Activated CD4-positive, alpha-beta T cell treated with anti-CD3 and anti-CD28 coated beads, Interleukin-2, amount 10 ng/mL, durations not matched to agents 24 days and 14 days (primary cell): ENCODE measurements at regions of chr2 and their contacts with region 1.

Region 1: GRCh38 chr2:230254152-230254881 is 28.8 kb downstream of the SP140 start:
- DNase-seq: peak; percentile 80
- H3K4me3 Mint-ChIP-seq: no peak overlapping the region
- H3K27ac Mint-ChIP-seq: no peak overlapping the region
- H3K4me1 Mint-ChIP-seq: peaks cover 18% of the 10 kb centered on the region
- H3K27me3 Mint-ChIP-seq: no peaks in the 10 kb centered on the region

Region 2: GRCh38 chr2:230234845-230235244 is 19.5 kb before region 1 on chr2:
- intact Hi-C with region 1: loop called (anchors 1 kb)
- DNase-seq: peak; percentile 57
- H3K4me3 Mint-ChIP-seq: peak overlapping the region; percentile 78
- H3K27ac Mint-ChIP-seq: peak overlapping the region; percentile 97
- H3K4me1 Mint-ChIP-seq: peaks cover 44% of the 10 kb centered on the region
- H3K27me3 Mint-ChIP-seq: no peaks in the 10 kb centered on the region

Region 3: DNA sequence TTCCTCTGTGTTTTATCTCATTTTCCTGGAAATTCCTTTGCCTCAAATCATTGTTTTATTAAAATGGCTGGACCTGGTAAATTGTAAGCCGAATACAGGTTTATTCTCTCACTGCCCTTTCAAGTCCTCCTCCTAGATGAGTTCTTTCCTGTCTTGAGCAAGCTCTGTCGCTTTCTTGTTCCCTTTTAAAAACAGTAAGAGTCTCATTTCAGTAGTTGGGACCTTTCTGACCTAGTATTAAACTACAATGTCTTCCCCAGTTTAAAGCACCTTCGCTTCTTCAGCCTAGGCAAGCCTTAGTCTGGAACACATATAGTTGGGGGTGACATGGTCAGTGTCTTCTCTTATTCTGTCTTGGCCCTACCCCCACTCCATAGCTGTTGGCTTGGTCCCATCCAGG is 31.7 kb after region 1 on chr2:
- intact Hi-C with region 1: loop called (anchors 1 kb)
- DNase-seq: no peak
- H3K4me3 Mint-ChIP-seq: no peak overlapping the region
- H3K27ac Mint-ChIP-seq: no peak overlapping the region
- H3K4me1 Mint-ChIP-seq: peaks cover 25% of the 10 kb centered on the region
- H3K27me3 Mint-ChIP-seq: no peaks in the 10 kb centered on the region

Region 4: DNA sequence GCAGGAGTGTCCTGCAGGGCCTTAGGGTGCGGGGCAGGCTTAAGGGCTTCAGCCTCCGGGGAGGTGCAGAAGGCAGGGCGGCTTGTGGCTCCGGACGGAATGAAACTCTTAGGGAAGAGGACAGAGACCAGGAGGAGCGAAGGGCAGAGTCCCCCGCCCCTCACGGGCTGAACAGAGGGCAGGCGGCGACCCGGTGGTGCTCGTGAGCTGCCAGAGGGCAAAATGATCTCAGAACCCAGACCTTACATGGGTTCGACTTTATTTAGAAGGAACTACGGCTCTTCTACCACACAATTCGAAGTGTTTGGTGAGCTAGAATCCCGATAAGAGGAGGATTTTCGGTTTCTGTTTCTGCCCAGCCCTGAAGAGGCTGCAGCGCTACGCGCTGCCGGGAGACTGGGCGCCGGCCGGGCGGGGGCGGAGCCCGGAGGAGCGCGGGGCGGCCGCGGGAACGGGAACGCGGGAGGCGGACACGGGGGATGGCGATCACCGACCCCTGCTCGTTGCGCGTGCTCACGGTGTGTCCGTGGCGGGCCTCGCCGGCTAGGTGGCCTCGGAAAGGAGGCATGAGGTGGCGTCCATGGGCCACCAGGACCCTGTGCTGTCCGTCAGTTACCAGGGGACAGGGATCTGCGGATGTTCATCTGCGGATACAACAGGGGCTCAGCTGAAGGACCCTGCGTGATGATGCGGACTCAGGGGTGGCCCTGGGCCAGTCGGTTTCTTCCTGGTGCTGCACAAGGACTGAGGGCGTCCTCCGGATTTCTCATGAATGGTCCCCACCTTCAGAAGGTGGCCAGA is 157.5 kb after region 1 on chr2:
- intact Hi-C with region 1: loop called (anchors 1 kb)
- DNase-seq: peak; percentile 95
- H3K4me3 Mint-ChIP-seq: peak overlapping the region; percentile 99
- H3K27ac Mint-ChIP-seq: peak overlapping the region; percentile 99
- H3K4me1 Mint-ChIP-seq: peaks cover 61% of the 10 kb centered on the region
- H3K27me3 Mint-ChIP-seq: no peaks in the 10 kb centered on the region

Region 5: GRCh38 chr2:230798769-230799399 is 544.6 kb after region 1 on chr2:
- intact Hi-C with region 1: loop called (anchors 1 kb)
- DNase-seq: peak; percentile 88
- H3K4me3 Mint-ChIP-seq: peak overlapping the region; percentile 31
- H3K27ac Mint-ChIP-seq: peak overlapping the region; percentile 71
- H3K4me1 Mint-ChIP-seq: peaks cover 22% of the 10 kb centered on the region
- H3K27me3 Mint-ChIP-seq: no peaks in the 10 kb centered on the region